Panc1 (cell line): ENCODE measurements at regions of chr20 and their contacts with region 1.

Region 1: DNA sequence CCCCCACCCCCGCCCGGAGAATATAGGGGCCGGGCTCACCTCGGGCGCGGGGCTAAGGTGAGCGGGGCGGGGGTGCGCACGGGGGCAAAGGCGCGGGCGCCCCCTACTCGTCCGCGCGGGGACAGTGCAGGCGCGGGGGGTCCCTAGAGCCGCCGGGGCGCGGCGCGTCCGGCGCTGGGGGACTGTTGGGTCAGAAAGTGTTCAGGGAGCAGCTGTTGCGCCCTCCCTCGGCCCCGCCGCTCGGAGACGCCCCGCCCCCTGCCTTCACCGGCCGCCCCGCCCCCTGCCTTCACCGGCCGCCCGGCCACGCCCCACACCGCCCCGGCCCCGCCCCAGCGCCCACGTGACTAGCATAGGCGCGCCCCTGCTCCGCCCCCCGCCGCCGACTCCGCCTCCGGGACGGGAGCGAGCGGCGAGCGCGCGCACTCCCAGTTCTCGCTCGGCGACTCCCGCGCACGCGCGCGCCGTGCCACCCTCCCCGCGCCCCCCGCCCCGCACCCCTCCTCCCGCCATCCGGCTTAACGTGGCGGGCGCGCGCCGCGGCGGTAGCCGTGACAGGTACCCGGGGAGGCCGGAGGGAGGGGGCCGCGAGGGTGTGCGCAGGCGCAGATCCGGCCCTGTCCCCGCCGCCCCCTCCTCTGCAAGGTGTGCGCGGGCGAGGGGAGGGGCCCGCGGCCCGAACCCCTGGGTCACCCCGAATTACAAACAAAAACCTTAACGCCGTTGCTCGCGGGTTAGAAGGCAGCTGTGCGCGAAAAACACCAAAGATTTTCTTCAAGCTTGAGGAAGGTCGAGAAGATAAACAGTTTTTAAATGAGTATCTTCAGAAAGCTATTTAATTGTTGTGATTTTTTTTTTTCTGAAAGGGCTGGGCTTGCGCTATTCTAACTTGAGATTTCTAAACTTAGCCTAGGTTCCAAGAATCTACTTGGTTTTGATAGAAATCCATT is 704 bp upstream of the ZNF217 start:
- DNase-seq: no peak
- ATAC-seq: peak; percentile 82
- H3K4me3 ChIP-seq: peak overlapping the region; percentile 66 to 67
- H3K27ac ChIP-seq: peak overlapping the region; percentile 98
- H3K4me1 ChIP-seq: peaks cover 18% of the 10 kb centered on the region
- H3K27me3 ChIP-seq: no peaks in the 10 kb centered on the region
- CTCF ChIP-seq: peak; percentile 83

Region 2: GRCh38 chr20:53176134-53176533 is 418.2 kb before region 1 on chr20:
- CTCF ChIA-PET with region 1: no interaction called
- POLR2A ChIA-PET with region 1: no interaction called
- in situ Hi-C with region 1: no loop called
- intact Hi-C with region 1: no loop called
- DNase-seq: no peak
- ATAC-seq: no peak
- H3K4me3 ChIP-seq: no peak overlapping the region
- H3K27ac ChIP-seq: no peak overlapping the region
- H3K4me1 ChIP-seq: no peaks in the 10 kb centered on the region
- H3K27me3 ChIP-seq: peaks cover 10% of the 10 kb centered on the region
- CTCF ChIP-seq: no peak

Region 3: DNA sequence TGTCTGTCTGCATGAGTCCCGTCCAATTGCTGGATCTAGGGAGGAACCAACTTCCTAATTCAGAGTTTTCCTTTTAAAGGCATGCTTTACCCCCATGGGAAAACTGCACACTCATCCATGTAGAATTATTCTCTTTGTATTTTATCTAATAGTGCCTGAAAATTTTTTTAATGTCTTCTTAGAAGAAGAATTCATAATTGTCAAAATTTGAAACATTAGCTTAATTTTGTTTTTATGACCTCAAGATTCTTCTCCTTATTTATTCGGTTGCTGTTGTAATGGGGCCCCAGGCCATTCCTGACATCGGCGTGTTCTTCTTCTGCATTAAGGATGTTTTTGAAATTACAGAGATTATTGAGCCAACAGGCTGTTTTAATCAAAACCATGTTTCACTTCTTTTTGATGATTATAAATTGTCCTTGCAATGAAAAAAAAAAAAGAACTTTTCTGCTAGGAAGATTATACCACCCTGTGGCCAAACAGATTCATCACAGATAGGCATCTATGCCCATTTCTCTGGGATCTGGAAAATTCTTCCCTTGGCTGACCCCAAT is 101.0 kb before region 1 on chr20:
- CTCF ChIA-PET with region 1: no interaction called
- POLR2A ChIA-PET with region 1: no interaction called
- in situ Hi-C with region 1: no loop called
- intact Hi-C with region 1: no loop called
- DNase-seq: no peak
- ATAC-seq: no peak
- H3K4me3 ChIP-seq: no peak overlapping the region
- H3K27ac ChIP-seq: no peak overlapping the region
- H3K4me1 ChIP-seq: no peaks in the 10 kb centered on the region
- H3K27me3 ChIP-seq: no peaks in the 10 kb centered on the region; the same call in 1 of the 2 replicates
- CTCF ChIP-seq: peak; percentile 8; the same call in 1 of the 2 replicates

Region 4: DNA sequence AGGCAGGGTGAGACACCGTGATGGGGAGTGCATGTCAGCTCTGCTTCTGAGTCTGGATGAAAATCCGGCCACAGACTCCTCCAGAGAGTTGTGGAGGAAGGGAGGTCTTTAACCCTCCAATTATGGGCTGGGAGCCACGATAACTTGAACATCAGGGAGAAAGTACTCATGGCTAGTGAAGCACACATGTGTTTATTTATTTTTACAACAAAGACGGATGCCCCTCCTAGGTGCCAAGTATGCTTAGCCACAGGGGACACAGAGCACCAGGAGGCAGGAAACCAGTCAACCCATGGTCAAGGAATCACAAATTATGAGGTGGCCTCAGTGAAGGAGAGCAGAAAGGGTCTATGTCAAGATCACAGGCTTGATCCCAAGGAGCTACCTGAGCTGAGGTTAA is 54.8 kb before region 1 on chr20:
- CTCF ChIA-PET with region 1: no interaction called
- POLR2A ChIA-PET with region 1: no interaction called
- in situ Hi-C with region 1: no loop called
- intact Hi-C with region 1: no loop called
- DNase-seq: no peak
- ATAC-seq: no peak
- H3K4me3 ChIP-seq: no peak overlapping the region
- H3K27ac ChIP-seq: no peak overlapping the region
- H3K4me1 ChIP-seq: no peaks in the 10 kb centered on the region
- H3K27me3 ChIP-seq: no peaks in the 10 kb centered on the region
- CTCF ChIP-seq: no peak

Region 5: GRCh38 chr20:53611449-53611894 is 17.1 kb after region 1 on chr20:
- CTCF ChIA-PET with region 1: interaction called, 3 read pairs
- POLR2A ChIA-PET with region 1: interaction called, 22 read pairs
- in situ Hi-C with region 1: no loop called
- intact Hi-C with region 1: no loop called
- DNase-seq: peak; percentile 90
- ATAC-seq: peak; percentile 73
- H3K4me3 ChIP-seq: peak overlapping the region; percentile 3 to 41; a peak in 3 of 4 replicates
- H3K27ac ChIP-seq: peak overlapping the region; percentile 100
- H3K4me1 ChIP-seq: peaks cover 53% of the 10 kb centered on the region
- H3K27me3 ChIP-seq: no peaks in the 10 kb centered on the region
- CTCF ChIP-seq: no peak

Region 6: DNA sequence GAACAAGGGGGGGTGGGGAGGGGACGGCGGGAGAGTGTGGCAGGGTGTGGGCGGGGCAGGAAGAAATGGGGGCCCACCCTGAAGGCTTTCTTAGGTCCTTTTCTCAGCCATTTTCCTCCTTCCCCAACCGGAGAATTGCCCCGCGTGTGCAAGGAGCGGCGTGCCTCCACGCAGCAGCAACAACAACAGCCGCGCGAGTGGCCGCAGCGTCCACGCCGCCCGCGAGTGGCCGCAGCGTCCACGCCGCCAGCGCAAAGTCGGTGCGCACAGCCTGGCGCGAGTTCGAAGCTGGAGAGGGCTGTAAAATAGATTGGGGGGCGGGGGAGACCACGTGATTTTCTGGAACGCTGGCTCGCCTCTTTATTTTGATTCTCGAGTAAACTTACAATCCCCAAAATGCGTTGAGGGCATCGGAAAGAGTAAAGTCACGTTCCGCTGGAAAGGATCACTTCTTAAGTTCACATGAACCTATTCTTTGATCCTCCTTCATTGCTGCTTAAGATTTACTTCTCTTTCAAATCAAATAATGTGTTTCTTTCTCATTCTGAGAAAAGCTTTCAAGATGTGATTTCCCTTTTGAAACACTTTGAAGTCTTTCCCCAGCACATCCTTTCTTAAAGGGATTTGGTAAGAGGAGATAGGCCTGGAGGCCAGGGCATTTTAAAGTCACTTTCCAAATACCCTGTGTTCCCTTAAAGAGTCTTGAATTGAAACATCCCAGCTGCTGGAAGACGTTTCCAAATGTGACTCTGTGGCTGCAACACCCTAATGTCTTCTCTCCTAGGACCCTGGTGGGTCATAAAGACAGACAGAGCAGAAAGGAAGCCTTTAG is 66.0 kb after region 1 on chr20:
- CTCF ChIA-PET with region 1: no interaction called
- POLR2A ChIA-PET with region 1: no interaction called
- in situ Hi-C with region 1: no loop called
- intact Hi-C with region 1: no loop called
- DNase-seq: no peak
- ATAC-seq: peak; percentile 43
- H3K4me3 ChIP-seq: no peak overlapping the region
- H3K27ac ChIP-seq: peak overlapping the region; percentile 100
- H3K4me1 ChIP-seq: peaks cover 60% of the 10 kb centered on the region
- H3K27me3 ChIP-seq: no peaks in the 10 kb centered on the region
- CTCF ChIP-seq: no peak

Region 7: GRCh38 chr20:53677447-53678314 is 83.3 kb after region 1 on chr20:
- CTCF ChIA-PET with region 1: no interaction called
- POLR2A ChIA-PET with region 1: interaction called, 14 read pairs
- in situ Hi-C with region 1: no loop called
- intact Hi-C with region 1: no loop called
- DNase-seq: no peak
- ATAC-seq: peak; percentile 86
- H3K4me3 ChIP-seq: peak overlapping the region in 1 of 2 experiments; percentile 32; a peak in 2 of 4 replicates
- H3K27ac ChIP-seq: peak overlapping the region; percentile 98
- H3K4me1 ChIP-seq: peaks cover 46% of the 10 kb centered on the region
- H3K27me3 ChIP-seq: no peaks in the 10 kb centered on the region
- CTCF ChIP-seq: no peak

Region 8: GRCh38 chr20:53750827-53751619 is 156.7 kb after region 1 on chr20:
- CTCF ChIA-PET with region 1: no interaction called
- POLR2A ChIA-PET with region 1: interaction called, 15 read pairs
- in situ Hi-C with region 1: no loop called
- intact Hi-C with region 1: no loop called
- DNase-seq: no peak
- ATAC-seq: peak; percentile 52
- H3K4me3 ChIP-seq: no peak overlapping the region
- H3K27ac ChIP-seq: peak overlapping the region; percentile 98
- H3K4me1 ChIP-seq: peaks cover 75% of the 10 kb centered on the region
- H3K27me3 ChIP-seq: no peaks in the 10 kb centered on the region
- CTCF ChIP-seq: no peak

Region 9: GRCh38 chr20:53839423-53840176 is 245.3 kb after region 1 on chr20:
- CTCF ChIA-PET with region 1: no interaction called
- POLR2A ChIA-PET with region 1: interaction called, 16 read pairs
- in situ Hi-C with region 1: no loop called
- intact Hi-C with region 1: no loop called
- DNase-seq: no peak
- ATAC-seq: peak; percentile 63
- H3K4me3 ChIP-seq: no peak overlapping the region
- H3K27ac ChIP-seq: peak overlapping the region; percentile 86
- H3K4me1 ChIP-seq: peaks cover 7% of the 10 kb centered on the region
- H3K27me3 ChIP-seq: no peaks in the 10 kb centered on the region
- CTCF ChIP-seq: no peak

Region 10: GRCh38 chr20:53939572-53940359 is 345.4 kb after region 1 on chr20:
- CTCF ChIA-PET with region 1: interaction called, 6 read pairs
- POLR2A ChIA-PET with region 1: interaction called, 14 read pairs
- in situ Hi-C with region 1: no loop called
- intact Hi-C with region 1: no loop called
- DNase-seq: peak; percentile 96
- ATAC-seq: peak; percentile 89
- H3K4me3 ChIP-seq: peak overlapping the region; percentile 15 to 38; a peak in 3 of 4 replicates
- H3K27ac ChIP-seq: peak overlapping the region; percentile 100
- H3K4me1 ChIP-seq: peaks cover 69% of the 10 kb centered on the region
- H3K27me3 ChIP-seq: no peaks in the 10 kb centered on the region
- CTCF ChIP-seq: peak; percentile 91